PC-3 (cell line): ENCODE measurements at regions of chr7 and their contacts with region 1.

Region 1: DNA sequence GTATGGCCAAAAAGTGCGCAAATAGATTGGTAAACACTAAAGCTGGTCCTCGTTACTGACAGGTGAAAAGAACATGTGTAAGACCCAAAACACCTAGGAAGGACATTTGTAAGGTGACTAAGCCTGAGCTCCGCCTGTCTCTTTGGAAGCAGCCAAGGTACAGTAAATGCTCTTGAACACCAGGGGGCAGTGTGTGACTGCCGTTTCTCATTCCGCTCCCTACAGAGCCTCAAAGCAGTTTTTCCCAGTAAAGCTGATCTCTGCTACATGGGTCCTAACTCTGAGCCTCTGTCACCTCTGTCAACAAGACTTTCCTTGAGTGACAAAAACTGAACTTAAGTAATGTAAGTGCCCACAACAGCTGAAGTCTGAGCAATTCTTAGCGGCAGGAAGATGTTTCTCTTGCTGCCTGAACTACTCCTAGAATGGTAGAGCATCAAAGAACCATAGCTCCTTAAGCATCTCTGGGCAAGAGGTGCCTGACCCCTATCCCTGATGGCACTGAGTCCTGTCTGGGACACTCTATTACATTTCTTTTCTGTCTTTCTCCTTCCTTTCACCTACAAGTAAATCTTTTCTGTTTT is 238.0 kb upstream of the INHBA start:
- DNase-seq: peak; percentile 87
- ATAC-seq: peak; percentile 70
- H3K4me3 ChIP-seq: no peak overlapping the region
- H3K27ac ChIP-seq: no peak overlapping the region
- H3K4me1 ChIP-seq: peaks cover 7% of the 10 kb centered on the region; the same call in 1 of the 2 replicates
- H3K27me3 ChIP-seq: no peaks in the 10 kb centered on the region
- CTCF ChIP-seq: peak; percentile 85

Region 2: GRCh38 chr7:40329601-40330153 is 1611.2 kb before region 1 on chr7:
- CTCF ChIA-PET with region 1: no interaction called
- POLR2A ChIA-PET with region 1: no interaction called
- intact Hi-C with region 1: loop called (anchors 5 kb)
- DNase-seq: peak; percentile 75
- ATAC-seq: peak; percentile 62
- H3K4me3 ChIP-seq: no peak overlapping the region
- H3K27ac ChIP-seq: no peak overlapping the region
- H3K4me1 ChIP-seq: no peaks in the 10 kb centered on the region
- H3K27me3 ChIP-seq: no peaks in the 10 kb centered on the region
- CTCF ChIP-seq: peak; percentile 77

Region 3: GRCh38 chr7:41374150-41374848 is 566.6 kb before region 1 on chr7:
- CTCF ChIA-PET with region 1: no interaction called
- POLR2A ChIA-PET with region 1: no interaction called
- intact Hi-C with region 1: no loop called
- DNase-seq: no peak
- ATAC-seq: no peak
- H3K4me3 ChIP-seq: no peak overlapping the region
- H3K27ac ChIP-seq: no peak overlapping the region
- H3K4me1 ChIP-seq: no peaks in the 10 kb centered on the region
- H3K27me3 ChIP-seq: no peaks in the 10 kb centered on the region
- CTCF ChIP-seq: no peak

Region 4: GRCh38 chr7:41834805-41835694 is 105.8 kb before region 1 on chr7:
- CTCF ChIA-PET with region 1: no interaction called
- POLR2A ChIA-PET with region 1: no interaction called
- intact Hi-C with region 1: no loop called
- DNase-seq: no peak
- ATAC-seq: no peak
- H3K4me3 ChIP-seq: no peak overlapping the region
- H3K27ac ChIP-seq: no peak overlapping the region
- H3K4me1 ChIP-seq: no peaks in the 10 kb centered on the region
- H3K27me3 ChIP-seq: no peaks in the 10 kb centered on the region
- CTCF ChIP-seq: no peak

Region 5: GRCh38 chr7:41922373-41922772 is 18.5 kb before region 1 on chr7:
- CTCF ChIA-PET with region 1: no interaction called
- POLR2A ChIA-PET with region 1: no interaction called
- intact Hi-C with region 1: no loop called
- DNase-seq: no peak
- ATAC-seq: no peak
- H3K4me3 ChIP-seq: no peak overlapping the region
- H3K27ac ChIP-seq: no peak overlapping the region
- H3K4me1 ChIP-seq: peaks cover 3% of the 10 kb centered on the region; the same call in 1 of the 2 replicates
- H3K27me3 ChIP-seq: no peaks in the 10 kb centered on the region
- CTCF ChIP-seq: no peak

Region 6: DNA sequence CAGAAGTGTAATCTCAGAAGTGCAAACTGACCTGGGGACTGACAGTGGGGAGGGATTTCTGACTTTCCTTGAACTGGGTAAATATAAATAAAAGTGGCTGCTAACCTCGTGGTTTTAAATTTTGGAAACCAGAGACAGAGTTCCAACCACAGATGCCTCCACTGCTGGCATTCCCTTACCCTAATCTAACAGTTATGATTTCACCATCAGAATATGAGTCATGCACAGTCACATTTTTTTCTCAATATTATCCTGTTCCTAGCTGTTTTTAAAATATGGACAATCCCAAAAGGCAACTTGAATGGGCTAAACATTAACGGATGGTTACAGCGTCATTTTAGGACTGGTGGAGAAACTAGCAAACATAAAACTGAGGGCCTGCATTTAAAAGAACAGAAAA is 26.3 kb after region 1 on chr7:
- CTCF ChIA-PET with region 1: no interaction called
- POLR2A ChIA-PET with region 1: no interaction called
- intact Hi-C with region 1: no loop called
- DNase-seq: peak; percentile 69
- ATAC-seq: peak; percentile 79
- H3K4me3 ChIP-seq: no peak overlapping the region
- H3K27ac ChIP-seq: no peak overlapping the region
- H3K4me1 ChIP-seq: peaks cover 5% of the 10 kb centered on the region
- H3K27me3 ChIP-seq: no peaks in the 10 kb centered on the region
- CTCF ChIP-seq: no peak

Region 7: DNA sequence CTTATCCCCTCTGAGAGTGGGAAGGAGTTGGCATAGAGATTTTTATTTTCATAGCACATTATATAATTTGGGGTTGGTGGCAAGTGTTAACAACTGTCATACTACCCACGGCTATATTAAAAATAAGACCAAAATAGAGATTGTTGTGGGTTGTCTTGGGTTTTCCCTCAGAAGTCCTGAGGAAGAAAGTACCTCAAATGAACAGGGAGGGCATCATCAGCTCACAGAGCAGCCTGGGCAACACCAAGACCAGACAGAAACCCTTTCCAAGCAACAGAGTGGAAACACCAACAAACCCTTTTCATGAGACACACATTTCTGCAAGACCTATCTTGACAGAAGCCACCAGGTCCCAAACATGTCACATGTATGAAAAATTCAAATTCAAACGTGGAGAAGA is 174.9 kb after region 1 on chr7:
- CTCF ChIA-PET with region 1: no interaction called
- POLR2A ChIA-PET with region 1: interaction called, 11 read pairs
- intact Hi-C with region 1: no loop called
- DNase-seq: no peak
- ATAC-seq: no peak
- H3K4me3 ChIP-seq: no peak overlapping the region
- H3K27ac ChIP-seq: no peak overlapping the region
- H3K4me1 ChIP-seq: no peaks in the 10 kb centered on the region; the same call in 1 of the 2 replicates
- H3K27me3 ChIP-seq: no peaks in the 10 kb centered on the region
- CTCF ChIP-seq: 0 out of 2 replicates have a peak, but pooled peaks have one; percentile 14

Region 8: GRCh38 chr7:42574685-42575084 is 633.8 kb after region 1 on chr7:
- CTCF ChIA-PET with region 1: no interaction called
- POLR2A ChIA-PET with region 1: no interaction called
- intact Hi-C with region 1: loop called (anchors 5 kb)
- DNase-seq: peak; percentile 34
- ATAC-seq: peak; percentile 80
- H3K4me3 ChIP-seq: no peak overlapping the region
- H3K27ac ChIP-seq: no peak overlapping the region
- H3K4me1 ChIP-seq: peaks cover 9% of the 10 kb centered on the region
- H3K27me3 ChIP-seq: no peaks in the 10 kb centered on the region
- CTCF ChIP-seq: peak; percentile 67

Region 9: GRCh38 chr7:42690794-42691639 is 750.2 kb after region 1 on chr7:
- CTCF ChIA-PET with region 1: interaction called, 8 read pairs
- POLR2A ChIA-PET with region 1: no interaction called
- intact Hi-C with region 1: loop called (anchors 1 kb)
- DNase-seq: peak; percentile 73
- ATAC-seq: peak; percentile 93
- H3K4me3 ChIP-seq: no peak overlapping the region
- H3K27ac ChIP-seq: no peak overlapping the region
- H3K4me1 ChIP-seq: peaks cover 4% of the 10 kb centered on the region; the same call in 1 of the 2 replicates
- H3K27me3 ChIP-seq: no peaks in the 10 kb centered on the region
- CTCF ChIP-seq: peak; percentile 78

Region 10: GRCh38 chr7:42843205-42843800 is 902.5 kb after region 1 on chr7:
- CTCF ChIA-PET with region 1: interaction called, 17 read pairs
- POLR2A ChIA-PET with region 1: no interaction called
- intact Hi-C with region 1: loop called (anchors 1 kb)
- DNase-seq: peak; percentile 63
- ATAC-seq: peak; percentile 99
- H3K4me3 ChIP-seq: peak overlapping the region; percentile 67
- H3K27ac ChIP-seq: no peak overlapping the region
- H3K4me1 ChIP-seq: no peaks in the 10 kb centered on the region
- H3K27me3 ChIP-seq: no peaks in the 10 kb centered on the region; the same call in 1 of the 2 replicates
- CTCF ChIP-seq: peak; percentile 78

Region 11: GRCh38 chr7:42931834-42932651 is 991.2 kb after region 1 on chr7 and contains the starts of genes MRPL32 and PSMA2:
- CTCF ChIA-PET with region 1: interaction called, 3 read pairs
- POLR2A ChIA-PET with region 1: no interaction called
- intact Hi-C with region 1: loop called (anchors 5 kb)
- DNase-seq: peak; percentile 97
- ATAC-seq: peak; percentile 99
- H3K4me3 ChIP-seq: peak within 1 kb of the TSS; percentile 96
- H3K27ac ChIP-seq: peak within 1 kb of the TSS; percentile 38
- H3K4me1 ChIP-seq: peaks cover 21% of the 10 kb centered on the region
- H3K27me3 ChIP-seq: no peaks in the 10 kb centered on the region
- CTCF ChIP-seq: no peak
- total RNA-seq, gene MRPL32: 75.4 and 104 TPM in 2 replicates
- total RNA-seq, gene PSMA2: 69.7 and 85.6 TPM in 2 replicates